ENCODE measurements at regions of chr2 and their contacts with region 1.

Region 1: DNA sequence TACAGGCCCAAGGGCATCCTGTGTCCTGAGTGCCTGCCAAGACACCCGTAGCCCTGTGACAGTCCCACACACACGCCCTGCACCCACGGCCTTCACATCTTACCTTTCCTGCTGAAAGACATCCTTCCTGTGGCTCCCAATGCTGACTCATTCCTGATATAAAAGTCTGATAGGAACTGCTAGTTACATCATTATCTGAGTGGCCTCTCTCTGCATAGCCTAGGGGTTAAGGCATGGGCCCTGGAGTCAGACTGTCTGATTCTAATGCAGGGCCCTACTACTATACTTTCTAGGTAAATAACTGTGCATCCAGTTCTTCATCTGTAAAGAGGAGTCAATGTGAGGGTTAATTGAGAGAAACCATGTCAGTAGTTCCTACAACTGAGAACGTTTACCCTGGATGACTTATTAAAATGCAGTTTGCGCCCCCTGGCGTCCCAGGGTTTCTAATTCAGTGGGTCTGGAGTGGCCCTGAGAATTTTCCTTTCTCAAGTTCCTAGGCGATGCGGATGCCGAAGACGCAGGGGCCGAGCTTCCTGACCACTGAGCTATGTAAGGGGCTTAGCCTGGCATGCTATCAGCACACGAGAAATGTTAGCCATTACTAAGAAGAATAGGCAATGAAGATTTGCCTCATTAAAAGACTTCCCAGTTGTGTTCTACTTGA is 6.0 kb upstream of the GPR45 start:
- DNase-seq: peak; percentile 71
- H3K4me3 Mint-ChIP-seq: no peak overlapping the region
- H3K27ac Mint-ChIP-seq: no peak overlapping the region
- H3K4me1 Mint-ChIP-seq: peaks cover 17% of the 10 kb centered on the region
- H3K27me3 Mint-ChIP-seq: peaks cover 35% of the 10 kb centered on the region

Region 2: DNA sequence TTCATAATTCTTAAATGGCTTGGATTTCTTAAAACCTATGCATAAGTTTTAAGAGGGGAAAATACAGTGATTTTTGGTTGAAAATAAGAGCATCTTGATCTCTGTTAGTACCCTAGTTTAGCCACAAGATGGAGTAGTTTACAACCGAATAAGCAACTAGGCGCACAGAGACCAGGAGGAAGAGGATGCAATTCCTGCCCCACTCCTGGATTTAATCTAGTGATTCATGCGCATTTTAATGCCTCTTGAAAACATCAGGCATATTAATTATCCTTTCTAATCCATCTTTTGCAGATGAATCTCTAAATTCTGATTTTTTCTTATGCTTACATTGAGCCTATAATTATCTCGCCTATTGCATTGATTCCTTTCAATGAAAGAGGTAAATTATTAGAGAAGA is 121.0 kb before region 1 on chr2:
- CTCF ChIA-PET with region 1: interaction called, 193 read pairs
- DNase-seq: no peak
- H3K4me3 Mint-ChIP-seq: no peak overlapping the region
- H3K27ac Mint-ChIP-seq: no peak overlapping the region
- H3K4me1 Mint-ChIP-seq: no peaks in the 10 kb centered on the region
- H3K27me3 Mint-ChIP-seq: no peaks in the 10 kb centered on the region